Right ventricle myocardium superior (tissue), 1 donor: ENCODE measurements at regions of chr1 and their contacts with region 1.

Region 1: DNA sequence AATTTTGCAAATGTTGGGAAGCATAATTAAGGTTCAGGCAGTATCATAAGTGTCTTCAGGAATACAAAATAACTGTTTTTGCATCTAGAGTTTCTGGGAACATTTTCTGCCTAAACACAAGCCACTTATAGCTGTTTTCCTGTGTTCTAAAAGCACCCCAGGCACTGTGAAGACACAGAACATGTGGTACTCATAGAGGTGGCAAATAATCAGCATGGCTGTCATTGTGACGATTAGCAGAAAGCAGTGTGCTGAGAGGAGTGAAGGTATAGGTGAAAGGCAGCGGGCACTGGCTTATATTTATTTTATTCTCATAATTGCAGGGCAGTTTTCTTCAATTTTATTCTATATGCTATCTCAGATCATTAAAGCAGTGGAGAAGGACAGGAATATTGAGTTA is 119.6 kb downstream of the LRRC53 start:
- DNase-seq: no peak
- ATAC-seq: peak; percentile 86

Region 2: DNA sequence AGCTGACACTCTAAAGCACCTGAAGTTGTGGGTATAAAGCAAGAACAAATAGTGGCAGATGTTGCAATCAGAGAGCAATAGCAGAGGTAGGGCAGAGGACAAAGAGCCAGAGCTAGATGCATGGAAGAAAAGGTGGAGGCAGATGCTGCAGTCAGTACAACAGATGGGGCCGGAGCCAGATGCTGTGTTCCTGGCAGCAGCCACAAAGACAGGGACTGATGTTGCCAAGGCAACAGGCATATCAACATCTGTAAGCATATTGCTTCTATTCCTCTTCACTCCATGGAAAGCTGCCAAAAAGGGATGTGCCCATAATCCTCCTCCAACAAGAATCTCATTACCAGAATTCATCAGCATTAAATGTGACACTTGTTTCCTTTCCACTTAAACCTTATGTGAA is 49.6 kb before region 1 on chr1:
- intact Hi-C with region 1: loop called (anchors 5 kb)
- DNase-seq: peak; percentile 44
- ATAC-seq: peak; percentile 32

Region 3: DNA sequence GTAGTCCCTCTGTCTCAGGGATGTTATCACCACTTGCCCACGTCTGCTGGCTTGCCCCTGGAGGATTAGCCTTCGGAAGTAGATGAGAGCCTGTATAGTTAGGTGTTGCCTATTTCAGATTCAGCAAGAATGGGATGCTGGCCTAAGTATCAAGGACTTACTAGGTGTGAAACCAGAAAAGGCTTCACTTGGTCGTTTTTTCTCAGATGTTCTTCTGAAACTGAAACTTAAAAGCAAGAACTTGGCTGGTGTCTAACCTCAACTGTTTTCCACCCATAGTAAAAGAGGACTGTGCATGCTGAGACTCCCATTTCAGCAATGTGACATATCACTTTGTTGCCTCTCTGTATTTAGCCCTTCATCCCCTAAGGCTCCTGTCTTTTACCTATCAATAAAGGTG is 186.6 kb after region 1 on chr1:
- intact Hi-C with region 1: no loop called
- DNase-seq: no peak
- ATAC-seq: no peak